Left ventricle myocardium inferior (tissue), 1 donor: ENCODE measurements at regions of chr11 and their contacts with region 1.

Region 1: DNA sequence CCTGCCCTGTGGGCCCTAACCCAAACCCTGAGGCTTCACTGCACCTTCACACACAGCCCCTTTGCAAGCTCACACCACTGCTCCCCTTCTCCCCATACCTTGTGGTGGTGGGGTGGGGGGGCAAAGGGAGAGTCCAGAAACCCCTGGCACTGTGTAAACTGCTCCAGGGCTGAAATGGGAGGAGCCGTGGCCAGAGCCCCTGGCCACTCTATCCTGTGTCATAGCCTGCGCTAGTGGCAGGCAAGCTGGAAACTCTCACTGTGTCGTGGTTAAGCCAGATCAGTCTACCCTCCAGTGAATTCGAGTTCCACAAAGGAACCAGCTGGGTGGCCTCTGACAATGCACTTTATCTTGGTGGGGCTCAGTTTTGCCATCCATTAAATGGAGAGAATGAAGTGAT is 8.4 kb upstream of the SYT13 start:
- DNase-seq: no peak
- H3K4me3 ChIP-seq: no peak overlapping the region
- H3K27ac ChIP-seq: no peak overlapping the region
- H3K4me1 ChIP-seq: no peaks in the 10 kb centered on the region
- H3K27me3 ChIP-seq: peaks cover 39% of the 10 kb centered on the region
- CTCF ChIP-seq: no peak

Region 2: DNA sequence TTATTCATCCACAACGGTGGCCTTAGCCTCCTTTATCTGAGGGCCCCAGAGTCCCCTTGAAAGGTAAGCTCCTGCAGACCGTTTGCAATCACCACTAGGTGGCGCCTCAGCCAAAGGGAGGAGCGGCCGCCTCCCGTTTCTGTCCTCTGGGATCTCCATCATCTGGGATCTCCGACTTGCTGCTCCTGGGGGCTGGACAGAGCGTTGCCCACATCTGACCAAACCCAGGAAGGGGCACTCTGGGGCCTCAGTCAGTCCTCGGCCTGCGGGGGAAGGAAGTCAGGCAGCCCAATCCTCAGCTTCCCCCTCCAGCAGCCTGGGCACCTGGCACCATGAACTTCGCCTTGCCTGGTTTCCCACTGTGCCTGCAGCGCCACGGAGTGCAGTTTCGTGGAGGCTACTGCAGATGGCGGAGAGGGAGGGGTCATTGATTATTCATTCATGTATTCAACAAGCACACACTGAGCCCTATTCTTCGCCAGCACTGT is 367.3 kb before region 1 on chr11:
- intact Hi-C with region 1: loop called (anchors 5 kb)
- DNase-seq: peak; percentile 61
- H3K4me3 ChIP-seq: no peak overlapping the region
- H3K27ac ChIP-seq: no peak overlapping the region
- H3K4me1 ChIP-seq: peaks cover 38% of the 10 kb centered on the region
- H3K27me3 ChIP-seq: no peaks in the 10 kb centered on the region
- CTCF ChIP-seq: peak; percentile 86

Region 3: DNA sequence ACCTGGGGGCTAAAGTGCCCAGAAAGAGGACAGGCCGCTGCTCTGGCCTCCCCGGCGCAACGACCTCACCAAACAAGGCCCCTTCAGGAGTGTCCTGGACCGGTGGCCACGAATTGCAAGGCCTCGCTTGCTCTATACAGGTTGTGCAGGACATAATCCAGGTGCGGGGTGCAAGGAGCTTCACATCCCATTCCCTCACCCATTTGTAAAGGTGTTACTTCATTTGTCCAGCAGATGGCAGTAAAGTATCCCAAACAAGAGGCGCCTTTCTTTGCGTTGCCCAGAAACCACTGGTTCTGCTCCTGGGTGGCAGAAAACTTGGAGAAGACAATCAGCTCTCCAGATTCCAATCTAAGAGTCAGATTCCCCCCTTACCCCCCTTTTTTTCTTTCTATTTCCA is 183.9 kb before region 1 on chr11:
- intact Hi-C with region 1: loop called (anchors 5 kb)
- DNase-seq: no peak
- H3K4me3 ChIP-seq: no peak overlapping the region
- H3K27ac ChIP-seq: no peak overlapping the region
- H3K4me1 ChIP-seq: peaks cover 2% of the 10 kb centered on the region
- H3K27me3 ChIP-seq: peaks cover 27% of the 10 kb centered on the region
- CTCF ChIP-seq: peak; percentile 88